ENCODE measurements at regions of chr19 and their contacts with region 1.

Region 1: GRCh38 chr19:54189735-54190502 is 539 bp upstream of the MBOAT7 start:
- DNase-seq: peak; percentile 100
- H3K4me3 ChIP-seq: peak overlapping the region; percentile 82
- H3K27ac ChIP-seq: peak overlapping the region; percentile 99
- H3K27me3 ChIP-seq: no peaks in the 10 kb centered on the region
- CTCF ChIP-seq: no peak

Region 2: GRCh38 chr19:54151362-54152035 is 38.4 kb before region 1 on chr19:
- CTCF ChIA-PET with region 1: no interaction called
- POLR2A ChIA-PET with region 1: no interaction called
- DNase-seq: no peak
- H3K4me3 ChIP-seq: no peak overlapping the region
- H3K27ac ChIP-seq: no peak overlapping the region
- H3K27me3 ChIP-seq: no peaks in the 10 kb centered on the region
- CTCF ChIP-seq: no peak

Region 3: GRCh38 chr19:54203151-54203611 is 13.3 kb after region 1 on chr19:
- CTCF ChIA-PET with region 1: interaction called, 4 read pairs
- POLR2A ChIA-PET with region 1: interaction called, 50 read pairs
- DNase-seq: no peak
- H3K4me3 ChIP-seq: peak overlapping the region; percentile 94
- H3K27ac ChIP-seq: no peak overlapping the region
- H3K27me3 ChIP-seq: no peaks in the 10 kb centered on the region
- CTCF ChIP-seq: no peak

Region 4: DNA sequence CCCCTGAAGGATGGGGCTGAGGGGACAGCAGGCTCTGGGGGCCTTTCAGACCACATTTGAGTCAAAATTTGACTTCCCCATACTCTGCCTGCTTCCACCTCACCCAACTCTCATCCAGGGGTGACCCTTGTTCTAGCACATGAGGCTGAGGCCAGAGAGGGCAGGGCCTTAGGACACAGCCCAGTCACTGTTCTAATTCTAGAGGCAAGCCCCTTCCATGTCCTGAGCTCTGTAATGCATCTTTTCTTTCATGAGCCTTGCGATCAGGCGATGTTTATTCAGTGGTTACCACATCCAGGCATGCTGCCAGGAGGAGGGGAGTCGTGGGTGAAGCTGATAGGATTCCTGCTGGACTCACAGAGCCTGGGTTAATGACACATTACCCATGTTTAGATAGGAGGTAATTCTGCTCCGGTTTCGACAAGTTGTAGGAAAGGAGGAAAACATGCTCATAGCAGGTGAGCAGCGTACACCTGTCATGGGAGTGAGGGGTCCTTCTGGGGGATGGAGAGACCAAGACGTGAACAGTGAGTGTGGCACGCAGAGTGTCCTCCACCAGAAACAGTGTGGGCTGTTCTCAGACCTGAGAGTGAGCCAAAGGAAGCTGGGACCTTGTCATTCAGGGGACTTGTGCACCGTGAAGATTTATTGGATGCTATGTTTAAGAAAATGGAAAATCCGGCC is 20.0 kb after region 1 on chr19:
- CTCF ChIA-PET with region 1: interaction called, 3 read pairs
- POLR2A ChIA-PET with region 1: interaction called, 29 read pairs
- DNase-seq: peak; percentile 96
- H3K4me3 ChIP-seq: peak overlapping the region; percentile 17; the same call in 1 of the 2 replicates
- H3K27ac ChIP-seq: peak overlapping the region; percentile 90
- H3K27me3 ChIP-seq: no peaks in the 10 kb centered on the region
- CTCF ChIP-seq: no peak